Motor neuron (in vitro differentiated cells): ENCODE measurements at regions of chr5 and their contacts with region 1.

Region 1: DNA sequence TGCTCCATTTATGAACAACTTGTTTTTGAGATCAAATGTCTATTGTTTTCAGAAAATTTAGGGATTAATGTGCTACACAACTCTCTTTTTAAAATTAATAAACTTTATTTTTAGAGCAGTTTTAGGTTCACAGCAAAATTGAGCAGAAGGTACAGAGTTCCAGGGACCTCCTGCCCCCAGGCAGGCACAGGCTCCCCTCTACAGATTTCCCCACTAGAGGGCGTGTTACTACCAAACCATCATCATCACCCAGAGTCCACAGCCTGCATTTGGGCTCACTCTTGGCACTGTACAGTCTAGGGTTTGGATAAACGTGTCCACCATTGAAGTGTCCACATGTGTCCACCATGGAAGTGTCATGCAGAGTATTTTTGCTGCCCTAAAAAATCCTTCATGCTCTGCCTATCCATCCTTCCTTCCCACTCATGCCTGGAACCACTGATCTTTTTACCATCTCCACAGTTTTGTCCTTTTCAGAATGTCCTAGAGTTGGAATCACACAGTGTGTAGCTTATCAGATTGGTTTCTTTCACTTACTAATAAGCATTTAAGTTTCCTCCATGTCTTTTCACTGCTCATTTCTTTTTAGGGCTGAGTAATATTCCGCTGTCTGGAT is 61.7 kb downstream of the MRPL36 start:
- ATAC-seq: peak in 3 of 8 experiments; percentile 55 to 74 (median 73)
- H3K4me3 ChIP-seq: no peak overlapping the region
- H3K27ac ChIP-seq: no peak overlapping the region
- H3K4me1 ChIP-seq: no peaks in the 10 kb centered on the region

Region 2: GRCh38 chr5:1488943-1489680 is 248.8 kb before region 1 on chr5:
- in situ Hi-C with region 1: no loop called
- ATAC-seq: peak in 2 of 8 experiments; percentile 99 to 100
- H3K4me3 ChIP-seq: no peak overlapping the region
- H3K27ac ChIP-seq: no peak overlapping the region
- H3K4me1 ChIP-seq: no peaks in the 10 kb centered on the region

Region 3: DNA sequence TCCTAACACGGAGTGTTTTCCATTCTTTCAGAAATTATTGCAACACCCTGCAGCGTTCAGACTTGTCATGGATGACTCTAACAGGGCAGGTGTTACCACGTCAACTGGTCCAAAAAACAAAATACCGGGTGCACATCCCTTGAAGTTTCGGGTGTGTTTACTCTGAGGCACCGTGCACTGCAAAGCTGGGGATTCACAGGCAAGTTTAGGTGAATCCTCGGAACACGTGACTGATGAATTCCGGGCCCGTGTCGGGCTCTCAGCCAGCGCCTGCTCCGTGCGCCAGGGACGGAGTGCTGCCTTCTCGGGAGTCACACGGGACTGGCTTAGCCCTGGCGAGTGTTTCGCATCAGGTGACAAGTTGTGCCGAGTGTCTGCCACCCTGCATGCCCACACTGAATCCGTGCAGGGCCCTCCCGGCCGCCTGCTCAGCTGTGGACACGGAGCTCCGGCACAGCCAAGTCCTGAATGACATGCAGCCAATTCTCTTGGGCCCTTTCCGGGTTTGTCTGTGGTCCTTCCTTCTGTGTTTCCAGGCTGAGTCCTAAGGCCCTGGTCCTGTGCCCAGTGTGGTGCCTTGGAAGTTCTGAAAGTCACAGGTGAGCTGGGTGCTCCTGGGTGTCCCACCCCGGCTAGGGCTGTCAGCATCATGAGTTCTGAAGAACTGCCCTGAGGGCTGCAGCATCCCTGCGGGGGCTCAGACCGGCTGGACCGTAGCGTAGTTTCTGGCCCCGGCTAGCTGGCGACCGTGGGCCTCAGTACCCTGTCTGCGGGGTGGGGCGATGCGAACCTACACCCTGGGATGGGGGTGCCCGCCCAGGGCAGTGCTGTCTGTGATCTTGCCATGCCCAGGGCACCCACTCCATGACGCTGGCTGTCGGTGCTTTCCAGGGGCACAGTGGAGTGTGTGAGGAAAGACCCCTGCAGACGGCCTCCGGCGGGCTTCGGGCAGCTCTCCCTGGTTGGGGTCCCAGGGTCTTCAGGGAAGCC is 211.1 kb after region 1 on chr5:
- in situ Hi-C with region 1: no loop called
- ATAC-seq: no peak
- H3K4me3 ChIP-seq: no peak overlapping the region
- H3K27ac ChIP-seq: no peak overlapping the region
- H3K4me1 ChIP-seq: no peaks in the 10 kb centered on the region

Region 4: DNA sequence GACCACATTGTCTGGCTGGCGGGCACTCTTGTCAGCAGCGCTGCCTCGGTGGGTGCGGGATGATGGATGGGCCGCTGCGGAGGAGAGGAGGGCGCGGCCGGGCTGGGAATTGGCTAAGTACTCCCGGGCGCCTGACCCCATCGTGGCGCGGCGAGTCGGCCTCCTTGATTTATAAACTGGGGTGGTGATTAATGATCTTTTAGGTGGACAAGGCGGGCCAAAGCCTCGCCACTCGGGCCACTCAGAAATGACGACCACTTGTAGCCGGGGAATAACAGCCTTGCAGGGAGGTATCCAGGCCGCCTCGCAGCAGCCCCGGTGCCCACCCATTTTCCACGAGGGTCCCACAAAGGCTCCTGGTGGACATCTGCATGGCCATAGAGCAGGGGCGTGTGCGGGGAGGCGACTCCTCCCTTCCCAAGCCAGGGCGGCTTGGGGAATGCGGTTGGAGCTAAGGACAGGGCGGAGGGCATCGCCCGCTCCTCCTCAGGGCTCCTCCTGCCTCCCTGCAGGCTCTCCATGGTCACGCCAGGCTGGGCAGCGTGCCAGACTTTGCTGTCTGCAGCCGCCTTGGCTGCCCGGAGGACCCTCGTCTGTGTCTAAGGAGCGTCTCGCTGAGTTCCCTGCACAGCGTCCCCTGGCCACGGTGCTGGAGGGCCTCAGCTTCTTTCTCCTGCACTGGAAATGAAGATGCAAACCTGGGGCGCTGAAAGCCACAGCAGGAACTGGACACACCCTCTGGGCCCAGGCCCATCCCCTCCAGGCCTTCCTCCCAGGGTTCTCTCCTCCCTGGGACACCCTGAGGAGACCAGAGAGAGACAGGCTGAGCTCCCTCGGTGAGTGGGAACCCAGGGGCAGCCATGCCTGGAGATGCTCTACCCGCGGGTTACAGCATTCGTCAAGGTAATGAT is 432.2 kb after region 1 on chr5:
- in situ Hi-C with region 1: loop called in 1 of 9 experiments (anchors 25 kb)
- ATAC-seq: peak in 6 of 8 experiments; percentile 62 to 84 (median 81)
- H3K4me3 ChIP-seq: no peak overlapping the region
- H3K27ac ChIP-seq: no peak overlapping the region
- H3K4me1 ChIP-seq: peaks cover 0 to 39% of the 10 kb centered on the region in 2 donors